ENCODE measurements at regions of chr1 and their contacts with region 1.

Region 1: GRCh38 chr1:43358746-43359693 is at the start of gene CDC20:
- DNase-seq: peak; percentile 91 to 99 (median 96)
- ATAC-seq: peak; percentile 100
- H3K4me3 ChIP-seq: peak within 1 kb of the TSS; percentile 90
- H3K4me3 Mint-ChIP-seq: peak within 1 kb of the TSS; percentile 74 to 97 (median 90)
- H3K27ac ChIP-seq: peak within 1 kb of the TSS; percentile 78
- H3K27ac Mint-ChIP-seq: peak within 1 kb of the TSS; percentile 22 to 88 (median 87)
- H3K4me1 ChIP-seq: peaks cover 5 to 10% of the 10 kb centered on the region in 2 donors
- H3K4me1 Mint-ChIP-seq: peaks cover 10 to 55% (median 20%) of the 10 kb centered on the region in 7 donors
- H3K27me3 ChIP-seq: no peaks in the 10 kb centered on the region
- H3K27me3 Mint-ChIP-seq: no peaks in the 10 kb centered on the region
- total RNA-seq, gene CDC20: 0.38 to 101 (median 0.78) TPM

Region 2: GRCh38 chr1:42816585-42817434 is 542.2 kb before region 1 on chr1 and contains the starts of genes ERMAP and SVBP:
- CTCF ChIA-PET with region 1: no interaction called
- POLR2A ChIA-PET with region 1: no interaction called
- intact Hi-C with region 1: loop called in 1 of 2 experiments (anchors 5 kb)
- DNase-seq: peak; percentile 86 to 98 (median 91)
- ATAC-seq: peak; percentile 97
- H3K4me3 ChIP-seq: peak within 1 kb of the TSS; percentile 69
- H3K4me3 Mint-ChIP-seq: peak within 1 kb of the TSS; percentile 76 to 90 (median 84)
- H3K27ac ChIP-seq: peak within 1 kb of the TSS; percentile 89
- H3K27ac Mint-ChIP-seq: peak within 1 kb of the TSS; percentile 64 to 94 (median 86)
- H3K4me1 ChIP-seq: peaks cover 6 to 10% of the 10 kb centered on the region in 2 donors
- H3K4me1 Mint-ChIP-seq: peaks cover 19 to 35% (median 29%) of the 10 kb centered on the region in 7 donors
- H3K27me3 ChIP-seq: no peaks in the 10 kb centered on the region
- H3K27me3 Mint-ChIP-seq: peaks cover 0 to 10% (median 0%) of the 10 kb centered on the region in 5 donors
- total RNA-seq, gene ERMAP: 6.1 to 10.3 (median 6.7) TPM
- total RNA-seq, gene SVBP: 12.7 to 22.2 (median 17.8) TPM

Region 3: GRCh38 chr1:43238085-43238484 is 120.9 kb before region 1 on chr1:
- CTCF ChIA-PET with region 1: no interaction called
- POLR2A ChIA-PET with region 1: no interaction called
- intact Hi-C with region 1: loop called in 1 of 2 experiments (anchors 1 kb)
- DNase-seq: peak in 4 of 9 donors; percentile 2 to 34 (median 18)
- ATAC-seq: no peak
- H3K4me3 ChIP-seq: no peak overlapping the region
- H3K4me3 Mint-ChIP-seq: no peak overlapping the region
- H3K27ac ChIP-seq: no peak overlapping the region
- H3K27ac Mint-ChIP-seq: peak overlapping the region in 1 of 9 donors; percentile 30
- H3K4me1 ChIP-seq: no peaks in the 10 kb centered on the region
- H3K4me1 Mint-ChIP-seq: peaks cover 0 to 14% (median 0%) of the 10 kb centered on the region in 7 donors
- H3K27me3 ChIP-seq: no peaks in the 10 kb centered on the region
- H3K27me3 Mint-ChIP-seq: peaks cover 0 to 5% (median 5%) of the 10 kb centered on the region in 5 donors

Region 4: DNA sequence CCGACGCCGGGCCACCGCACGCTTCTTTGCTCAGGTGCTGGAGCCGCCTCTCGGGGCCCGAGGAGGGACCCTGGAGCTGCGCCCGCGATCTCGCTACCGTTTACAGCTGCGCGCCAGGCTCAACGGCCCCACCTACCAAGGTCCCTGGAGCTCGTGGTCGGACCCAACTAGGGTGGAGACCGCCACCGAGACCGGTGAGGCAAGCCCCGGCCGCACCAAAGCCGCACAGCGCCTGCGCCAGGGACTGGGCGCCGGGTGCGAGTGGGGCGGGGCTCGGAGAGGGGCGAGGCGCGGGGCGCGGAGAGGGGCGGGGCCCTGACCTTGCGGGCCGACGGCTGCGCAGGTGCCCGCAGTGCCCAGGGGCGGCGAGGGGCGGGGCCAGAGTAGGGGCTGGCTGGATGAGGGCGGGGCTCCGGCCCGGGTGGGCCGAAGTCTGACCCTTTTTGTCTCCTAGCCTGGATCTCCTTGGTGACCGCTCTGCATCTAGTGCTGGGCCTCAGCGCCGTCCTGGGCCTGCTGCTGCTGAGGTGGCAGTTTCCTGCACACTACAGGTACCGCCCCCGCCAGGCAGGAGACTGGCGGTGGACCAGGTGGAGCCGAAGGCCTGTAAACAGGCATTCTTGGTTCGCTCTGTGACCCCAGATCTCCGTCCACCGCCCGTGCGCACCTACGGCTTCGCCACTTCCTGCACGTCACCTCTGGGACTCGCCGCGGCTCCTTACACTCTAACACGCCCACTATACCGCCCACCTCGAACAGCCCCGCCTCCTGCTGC is 10.0 kb before region 1 on chr1:
- CTCF ChIA-PET with region 1: no interaction called
- POLR2A ChIA-PET with region 1: interaction called, 4 read pairs
- intact Hi-C with region 1: loop called in 1 of 2 experiments (anchors 1 kb)
- DNase-seq: peak; percentile 26 to 79 (median 58)
- ATAC-seq: peak; percentile 91
- H3K4me3 ChIP-seq: peak overlapping the region; percentile 35
- H3K4me3 Mint-ChIP-seq: peak overlapping the region; percentile 68 to 89 (median 79)
- H3K27ac ChIP-seq: peak overlapping the region; percentile 79
- H3K27ac Mint-ChIP-seq: peak overlapping the region; percentile 60 to 97 (median 94)
- H3K4me1 ChIP-seq: peaks cover 0 to 4% of the 10 kb centered on the region in 2 donors
- H3K4me1 Mint-ChIP-seq: peaks cover 8 to 11% (median 9%) of the 10 kb centered on the region in 7 donors
- H3K27me3 ChIP-seq: no peaks in the 10 kb centered on the region
- H3K27me3 Mint-ChIP-seq: no peaks in the 10 kb centered on the region

Region 5: GRCh38 chr1:43706598-43707495 is 347.8 kb after region 1 on chr1:
- CTCF ChIA-PET with region 1: no interaction called
- POLR2A ChIA-PET with region 1: no interaction called
- intact Hi-C with region 1: loop called in 1 of 2 experiments (anchors 2 kb)
- DNase-seq: peak; percentile 84 to 94 (median 89)
- ATAC-seq: peak; percentile 98
- H3K4me3 ChIP-seq: peak overlapping the region; percentile 92
- H3K4me3 Mint-ChIP-seq: peak overlapping the region; percentile 82 to 90 (median 88)
- H3K27ac ChIP-seq: peak overlapping the region; percentile 79
- H3K27ac Mint-ChIP-seq: peak overlapping the region in 7 of 9 donors; percentile 32 to 87 (median 79)
- H3K4me1 ChIP-seq: peaks cover 7 to 10% of the 10 kb centered on the region in 2 donors
- H3K4me1 Mint-ChIP-seq: peaks cover 7 to 46% (median 27%) of the 10 kb centered on the region in 7 donors
- H3K27me3 ChIP-seq: no peaks in the 10 kb centered on the region
- H3K27me3 Mint-ChIP-seq: no peaks in the 10 kb centered on the region